Heart left ventricle (tissue), 16 donors: ENCODE measurements at regions of chr18 and their contacts with region 1.

Region 1: GRCh38 chr18:9808295-9809241 is 77.2 kb upstream of the TXNDC2 start:
- DNase-seq: peak in 2 of 5 donors; percentile 50 to 56
- ATAC-seq: peak; percentile 58 to 74 (median 64)
- H3K4me3 ChIP-seq: peak overlapping the region in 2 of 12 donors; percentile 23 to 28
- H3K27ac ChIP-seq: peak overlapping the region; percentile 7 to 76 (median 62)
- H3K4me1 ChIP-seq: peaks cover 0 to 58% (median 33%) of the 10 kb centered on the region in 12 donors
- H3K27me3 ChIP-seq: no peaks in the 10 kb centered on the region
- CTCF ChIP-seq: no peak
- POLR2A ChIP-seq: no peak

Region 2: DNA sequence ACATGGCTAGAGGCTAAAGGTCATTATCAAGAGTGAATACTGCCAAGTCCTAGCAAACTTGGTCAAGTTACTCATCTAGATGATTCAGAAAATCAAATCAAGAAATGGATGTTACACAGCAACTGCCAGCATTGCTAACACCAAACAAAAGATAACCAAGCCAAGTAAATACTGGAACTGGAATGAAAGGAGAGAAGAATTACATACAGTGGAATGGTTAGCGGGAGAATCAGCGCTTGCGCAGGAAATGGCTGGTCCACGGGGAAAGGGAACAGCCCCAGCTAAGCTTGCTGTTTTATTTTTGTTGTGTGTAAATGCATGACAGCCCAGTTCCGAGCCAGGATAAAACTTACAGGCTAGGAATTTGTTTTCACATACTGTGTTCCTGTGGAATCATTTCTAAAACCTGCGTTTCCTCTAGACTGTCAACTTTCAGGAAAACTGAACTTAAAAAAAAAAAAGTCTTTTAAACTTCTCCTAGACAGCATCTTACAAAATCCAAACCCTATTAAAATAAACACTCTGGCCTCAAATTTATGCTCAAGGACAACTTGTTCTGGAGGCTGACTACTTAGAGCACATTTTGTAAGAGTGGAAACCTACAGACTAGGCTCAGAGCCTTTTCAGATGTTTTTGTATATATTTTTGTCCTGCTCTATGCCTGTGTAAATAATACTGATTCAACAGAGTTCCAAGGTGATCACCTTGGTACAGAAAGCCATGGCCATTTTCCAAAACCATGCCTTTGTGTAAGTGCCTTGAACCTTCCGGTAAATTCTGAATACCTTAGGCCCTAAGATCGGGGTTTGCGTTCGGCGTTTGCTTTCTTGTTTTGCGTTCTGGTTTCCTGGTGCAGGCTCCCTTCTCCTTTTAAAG is 46.5 kb after region 1 on chr18:
- intact Hi-C with region 1: loop called in 1 of 10 experiments (anchors 5 kb)
- DNase-seq: no peak
- ATAC-seq: no peak
- H3K4me3 ChIP-seq: no peak overlapping the region
- H3K27ac ChIP-seq: peak overlapping the region in 1 of 12 donors; percentile 85
- H3K4me1 ChIP-seq: peaks cover 0 to 14% (median 0%) of the 10 kb centered on the region in 12 donors
- H3K27me3 ChIP-seq: no peaks in the 10 kb centered on the region
- CTCF ChIP-seq: no peak
- POLR2A ChIP-seq: no peak

Region 3: DNA sequence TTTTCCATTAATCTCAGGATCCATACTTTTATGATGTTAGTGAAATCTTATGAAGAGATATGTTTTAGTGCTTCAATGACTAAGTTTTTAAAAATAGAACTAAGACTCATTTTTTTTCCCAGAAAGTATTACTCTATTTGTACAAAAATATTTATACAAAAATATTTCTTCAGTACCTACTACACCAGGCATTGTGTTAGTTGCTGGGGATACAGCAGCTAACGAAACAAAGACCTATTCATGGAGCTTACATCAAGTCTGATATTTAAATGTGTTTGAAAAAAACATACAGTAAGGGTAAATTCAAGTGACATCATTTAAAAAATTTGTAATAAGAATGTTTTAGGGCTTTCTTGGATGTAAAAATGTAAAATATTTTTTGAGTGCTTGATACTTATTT is 116.8 kb after region 1 on chr18:
- intact Hi-C with region 1: loop called in 1 of 10 experiments (anchors 10 kb)
- DNase-seq: no peak
- ATAC-seq: peak in 2 of 4 donors; percentile 31 to 55
- H3K4me3 ChIP-seq: no peak overlapping the region
- H3K27ac ChIP-seq: peak overlapping the region in 7 of 12 donors; percentile 2 to 51 (median 18)
- H3K4me1 ChIP-seq: peaks cover 3 to 99% (median 87%) of the 10 kb centered on the region in 12 donors
- H3K27me3 ChIP-seq: no peaks in the 10 kb centered on the region
- CTCF ChIP-seq: no peak
- POLR2A ChIP-seq: no peak

Region 4: GRCh38 chr18:9943311-9943710 is 134.7 kb after region 1 on chr18:
- intact Hi-C with region 1: loop called in 2 of 10 experiments (anchors 10 kb)
- DNase-seq: no peak
- ATAC-seq: peak in 3 of 4 donors; percentile 41 to 57 (median 53)
- H3K4me3 ChIP-seq: no peak overlapping the region
- H3K27ac ChIP-seq: no peak overlapping the region
- H3K4me1 ChIP-seq: peaks cover 0 to 10% (median 0%) of the 10 kb centered on the region in 12 donors
- H3K27me3 ChIP-seq: no peaks in the 10 kb centered on the region
- CTCF ChIP-seq: no peak
- POLR2A ChIP-seq: no peak

Region 5: GRCh38 chr18:10015941-10016819 is 207.6 kb after region 1 on chr18:
- intact Hi-C with region 1: no loop called
- DNase-seq: peak in 4 of 5 donors; percentile 34 to 60 (median 38)
- ATAC-seq: peak; percentile 76 to 89 (median 83)
- H3K4me3 ChIP-seq: no peak overlapping the region
- H3K27ac ChIP-seq: peak overlapping the region; percentile 49 to 86 (median 66)
- H3K4me1 ChIP-seq: peaks cover 0 to 50% (median 31%) of the 10 kb centered on the region in 12 donors
- H3K27me3 ChIP-seq: no peaks in the 10 kb centered on the region
- CTCF ChIP-seq: peak in 9 of 12 donors; percentile 24 to 64 (median 45)
- POLR2A ChIP-seq: no peak